ENCODE measurements at regions of chr12 and their contacts with region 1.

Region 1: DNA sequence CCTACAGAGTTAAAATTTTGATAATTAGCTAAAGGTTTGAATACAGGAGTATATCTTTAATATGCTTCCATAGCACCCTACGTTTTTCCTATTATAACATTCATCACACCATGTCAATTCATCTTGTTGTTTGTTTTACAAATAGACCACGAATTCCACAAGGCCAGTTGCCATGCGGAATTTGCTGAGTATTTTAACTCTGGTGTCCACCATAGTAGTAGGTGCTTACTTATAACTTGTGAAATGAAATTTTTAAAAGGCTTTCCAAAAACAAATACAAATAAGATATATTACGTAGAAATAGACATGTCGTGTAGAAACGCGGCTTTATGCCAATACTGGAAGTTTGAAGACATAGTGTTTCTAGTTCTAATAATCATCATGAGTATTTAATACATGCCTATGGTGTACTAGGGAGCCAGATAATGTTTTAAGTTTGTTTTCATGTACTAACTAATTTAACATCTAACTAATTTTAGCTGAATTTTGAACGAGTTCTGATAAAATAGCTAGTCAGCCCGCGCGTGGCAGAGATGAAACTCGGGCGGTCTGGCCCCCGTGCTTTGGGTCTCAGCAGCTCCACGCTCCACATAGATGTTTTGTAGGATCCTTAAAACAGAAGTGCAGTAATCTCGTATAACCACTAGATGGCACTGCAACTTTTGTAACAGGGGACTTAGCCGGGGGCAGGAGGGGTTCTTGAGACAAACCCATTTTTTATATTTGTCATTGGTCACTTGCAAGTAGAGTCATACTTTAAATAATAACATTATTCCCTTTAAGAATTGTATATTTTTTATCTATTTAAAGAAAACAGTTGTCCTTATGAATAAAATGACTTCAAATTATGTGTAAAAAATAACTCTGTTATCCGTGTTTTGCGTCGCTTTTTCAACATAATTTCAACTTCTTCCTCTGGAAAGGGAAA is 10.2 kb downstream of the CD69 start:
- DNase-seq: peak; percentile 82 to 90 (median 90)
- H3K4me3 ChIP-seq: peak overlapping the region in 5 of 7 experiments; percentile 10 to 69 (median 54)
- H3K27ac ChIP-seq: peak overlapping the region in 1 of 2 experiments; percentile 43
- H3K4me1 ChIP-seq: peaks cover 5 to 39% (median 12%) of the 10 kb centered on the region in 4 experiments
- H3K27me3 ChIP-seq: no peaks in the 10 kb centered on the region

Region 2: GRCh38 chr12:9597365-9597764 is 153.2 kb before region 1 on chr12:
- CTCF ChIA-PET with region 1: no interaction called
- POLR2A ChIA-PET with region 1: no interaction called
- DNase-seq: no peak
- H3K4me3 ChIP-seq: no peak overlapping the region
- H3K27ac ChIP-seq: no peak overlapping the region
- H3K4me1 ChIP-seq: no peaks in the 10 kb centered on the region
- H3K27me3 ChIP-seq: no peaks in the 10 kb centered on the region

Region 3: DNA sequence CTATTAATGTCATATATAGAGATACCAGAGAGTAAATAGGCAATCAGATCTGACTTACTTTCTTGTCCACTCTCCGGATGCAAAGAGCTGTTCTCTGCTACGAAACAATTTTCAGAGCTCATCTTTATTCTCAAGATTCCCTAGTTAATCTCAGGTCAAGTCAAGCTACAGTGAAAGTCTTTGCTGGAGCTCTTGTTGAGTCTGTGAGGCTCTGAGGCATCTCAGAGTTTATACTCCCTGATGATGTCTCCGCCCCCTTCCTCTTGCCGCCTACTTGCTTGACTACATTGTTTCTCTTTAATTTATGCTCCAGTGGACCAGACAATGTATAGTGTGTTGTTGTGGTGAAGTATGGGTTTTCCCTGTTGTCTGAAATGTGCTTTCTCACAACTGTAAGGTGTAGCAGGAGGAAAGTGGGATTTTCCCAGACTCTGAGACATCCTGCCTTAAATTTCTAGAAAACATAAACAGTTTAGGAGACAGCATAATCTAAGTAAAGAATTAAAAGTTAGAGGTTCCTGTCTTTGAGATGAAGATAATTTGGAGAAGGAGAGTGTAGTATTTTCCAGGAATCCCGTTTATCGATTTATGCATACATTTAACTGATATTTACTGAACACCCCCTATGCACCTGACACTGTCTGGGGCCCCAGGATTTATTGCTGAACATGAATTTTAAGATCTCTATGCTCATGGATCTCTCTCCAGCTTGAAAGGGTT is 10.3 kb after region 1 on chr12 and contains the start of gene CD69:
- CTCF ChIA-PET with region 1: interaction called, 38 read pairs
- POLR2A ChIA-PET with region 1: interaction called, 18 read pairs
- DNase-seq: peak; percentile 82 to 95 (median 93)
- H3K4me3 ChIP-seq: peak within 1 kb of the TSS in 6 of 7 experiments; percentile 70 to 100 (median 94)
- H3K27ac ChIP-seq: peak within 1 kb of the TSS; percentile 86 to 95
- H3K4me1 ChIP-seq: peaks cover 43 to 68% (median 61%) of the 10 kb centered on the region in 4 experiments
- H3K27me3 ChIP-seq: no peaks in the 10 kb centered on the region

Region 4: DNA sequence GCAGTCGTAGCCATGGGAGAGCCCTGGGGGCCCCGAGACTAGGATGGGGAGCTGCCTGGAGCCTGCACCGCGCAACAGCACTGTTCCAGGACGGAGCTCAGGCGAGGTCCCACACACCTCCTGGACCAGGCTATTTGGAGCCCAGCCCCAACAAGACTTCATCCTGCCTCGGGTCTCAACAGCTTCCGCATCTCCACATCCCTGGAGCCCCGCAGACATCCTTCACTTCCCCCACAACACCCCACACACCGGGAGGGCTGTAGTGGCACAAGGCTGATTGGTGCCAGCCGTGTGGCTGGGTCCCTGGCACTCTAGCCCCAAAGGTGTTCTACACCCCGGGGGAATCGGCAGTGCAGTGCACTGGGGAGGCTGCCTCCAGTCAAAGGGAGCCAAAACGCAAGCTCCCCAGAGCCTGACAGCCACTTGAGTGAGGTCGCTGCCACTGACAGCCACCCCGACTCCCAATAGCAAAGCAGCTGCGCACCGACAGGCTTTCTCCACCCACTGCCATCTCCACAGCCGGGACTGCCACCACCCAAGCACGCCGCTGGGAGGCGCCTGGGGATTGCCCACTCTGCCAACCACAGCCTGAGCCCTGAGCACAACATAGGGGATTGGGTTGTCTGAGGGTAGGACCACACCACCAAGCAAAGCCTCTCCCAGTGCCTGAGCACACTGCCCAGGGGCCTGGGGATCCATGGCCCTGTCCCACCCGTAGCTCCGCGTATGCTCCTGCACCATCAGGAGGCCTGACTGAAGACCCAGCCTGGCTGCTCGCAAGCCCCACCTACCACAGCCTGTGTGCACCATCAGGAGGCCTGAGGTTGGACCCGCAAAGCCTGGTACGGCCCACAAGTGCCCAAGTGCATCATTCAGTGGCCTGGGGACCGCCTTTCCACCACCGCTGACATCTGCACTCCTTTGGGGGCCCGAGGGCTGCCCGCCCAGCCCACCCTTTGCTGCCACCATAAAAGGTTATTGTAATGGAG is 63.6 kb after region 1 on chr12:
- CTCF ChIA-PET with region 1: interaction called, 70 read pairs
- POLR2A ChIA-PET with region 1: interaction called, 5 read pairs
- DNase-seq: peak; percentile 85 to 93 (median 92)
- H3K4me3 ChIP-seq: peak overlapping the region; percentile 55 to 89 (median 72)
- H3K27ac ChIP-seq: no peak overlapping the region
- H3K4me1 ChIP-seq: peaks cover 4 to 42% (median 12%) of the 10 kb centered on the region in 4 experiments
- H3K27me3 ChIP-seq: no peaks in the 10 kb centered on the region

Region 5: GRCh38 chr12:9932270-9932669 is 181.7 kb after region 1 on chr12 and contains the start of gene CLEC2A:
- CTCF ChIA-PET with region 1: interaction called, 24 read pairs
- POLR2A ChIA-PET with region 1: no interaction called
- DNase-seq: no peak
- H3K4me3 ChIP-seq: no peak within 1 kb of the TSS
- H3K27ac ChIP-seq: no peak within 1 kb of the TSS
- H3K4me1 ChIP-seq: peaks cover 0 to 10% (median 6%) of the 10 kb centered on the region in 4 experiments
- H3K27me3 ChIP-seq: no peaks in the 10 kb centered on the region

Region 6: DNA sequence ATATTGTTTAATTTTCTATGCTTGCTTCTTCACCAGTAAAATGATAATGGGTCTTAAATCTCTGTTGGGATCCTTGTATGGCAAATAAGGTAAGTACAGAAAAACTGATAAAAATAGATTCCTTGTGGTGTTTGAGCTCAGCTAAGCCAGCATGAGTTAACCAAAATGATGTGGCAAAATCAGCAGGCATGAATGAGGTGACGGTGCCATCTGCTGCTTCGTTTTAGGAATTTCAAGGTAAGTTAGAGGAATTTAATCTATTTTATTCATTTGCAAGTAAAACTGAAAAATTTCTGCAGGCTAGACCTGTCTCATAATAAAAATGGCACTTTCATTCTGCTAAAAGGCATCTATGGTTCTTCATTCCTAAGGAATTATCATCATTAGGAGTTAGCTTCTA is 389.5 kb after region 1 on chr12:
- CTCF ChIA-PET with region 1: interaction called, 33 read pairs
- POLR2A ChIA-PET with region 1: no interaction called
- DNase-seq: peak; percentile 84 to 94 (median 90)
- H3K4me3 ChIP-seq: no peak overlapping the region
- H3K27ac ChIP-seq: no peak overlapping the region
- H3K4me1 ChIP-seq: peaks cover 0 to 9% (median 1%) of the 10 kb centered on the region in 4 experiments
- H3K27me3 ChIP-seq: no peaks in the 10 kb centered on the region

Measured in common myeloid progenitor, CD34-positive (primary cell).